ENCODE measurements at regions of chr11 and their contacts with region 1.

Region 1: GRCh38 chr11:66529655-66530054 is 16.2 kb downstream of the ZDHHC24 start:
- DNase-seq: no peak
- H3K4me3 ChIP-seq: no peak overlapping the region
- H3K27ac ChIP-seq: no peak overlapping the region
- H3K4me1 ChIP-seq: no peaks in the 10 kb centered on the region
- H3K27me3 ChIP-seq: no peaks in the 10 kb centered on the region
- CTCF ChIP-seq: no peak

Region 2: DNA sequence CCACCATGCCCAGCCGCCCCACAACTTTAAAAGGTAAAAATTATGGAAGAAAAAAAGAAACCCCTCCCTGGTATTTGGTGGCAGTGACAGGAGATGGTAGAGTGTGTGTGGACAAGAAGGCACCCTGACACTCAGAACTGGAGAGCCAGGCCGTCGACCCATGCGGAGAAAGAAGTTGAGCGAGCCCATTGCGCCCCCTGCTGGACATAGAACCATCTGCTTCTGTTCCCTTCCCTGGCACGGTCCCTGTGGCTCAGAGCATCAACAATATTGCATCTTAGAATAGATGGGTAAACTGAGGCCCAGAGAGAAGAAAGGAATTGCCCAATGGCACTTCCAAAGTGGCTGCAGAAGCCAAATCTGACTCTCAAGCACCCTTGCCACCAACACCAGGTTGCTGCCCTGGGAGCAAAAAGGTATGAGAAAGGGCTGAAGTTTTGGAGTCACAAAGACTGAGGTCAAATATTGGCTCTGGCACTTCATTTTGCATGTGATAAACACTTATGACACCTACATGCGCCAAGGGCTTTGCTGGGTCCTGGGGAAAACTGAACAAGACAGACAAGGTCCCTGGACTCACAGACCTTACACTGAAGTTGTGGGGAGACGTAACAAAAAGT is 99.6 kb before region 1 on chr11:
- CTCF ChIA-PET with region 1: no interaction called
- dilution Hi-C with region 1: loop called (anchors 5 kb)
- in situ Hi-C with region 1: no loop called
- intact Hi-C with region 1: no loop called
- DNase-seq: peak; percentile 39
- H3K4me3 ChIP-seq: no peak overlapping the region
- H3K27ac ChIP-seq: no peak overlapping the region
- H3K4me1 ChIP-seq: no peaks in the 10 kb centered on the region
- H3K27me3 ChIP-seq: no peaks in the 10 kb centered on the region
- CTCF ChIP-seq: peak; percentile 80 to 89

Region 3: DNA sequence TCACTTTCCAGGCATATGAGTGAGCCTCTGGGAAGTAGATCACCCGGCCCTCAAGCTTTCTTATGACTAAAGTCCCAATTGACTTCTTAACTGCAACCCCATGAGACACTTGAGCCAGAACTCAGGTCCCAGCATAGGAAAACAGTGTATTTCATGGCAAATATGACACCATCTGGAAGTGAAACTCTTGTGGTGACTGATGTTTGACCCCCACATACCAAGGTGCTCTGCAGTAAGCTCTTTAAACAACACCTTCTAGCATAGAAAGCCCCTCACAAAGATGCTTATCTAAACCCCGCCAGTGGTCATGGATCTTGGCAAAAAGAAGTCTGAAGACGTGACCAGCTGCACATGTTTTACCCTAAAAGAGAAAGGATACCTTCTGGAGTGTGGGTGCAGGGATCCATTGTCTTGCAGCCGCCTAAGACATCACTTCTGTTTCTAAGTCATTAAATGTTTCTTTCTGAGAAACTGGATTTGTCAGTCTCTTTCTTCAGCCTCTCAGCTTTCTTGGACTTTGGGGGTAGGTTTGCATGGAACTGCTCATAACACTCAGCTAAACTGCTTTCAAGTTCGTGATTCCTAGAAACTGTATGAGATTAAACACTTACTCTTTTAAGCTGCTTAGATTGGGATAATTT is 70.4 kb before region 1 on chr11:
- CTCF ChIA-PET with region 1: no interaction called
- dilution Hi-C with region 1: loop called (anchors 5 kb)
- in situ Hi-C with region 1: no loop called
- intact Hi-C with region 1: no loop called
- DNase-seq: no peak
- H3K4me3 ChIP-seq: no peak overlapping the region
- H3K27ac ChIP-seq: no peak overlapping the region
- H3K4me1 ChIP-seq: peaks cover 6% of the 10 kb centered on the region
- H3K27me3 ChIP-seq: no peaks in the 10 kb centered on the region
- CTCF ChIP-seq: no peak

Region 4: DNA sequence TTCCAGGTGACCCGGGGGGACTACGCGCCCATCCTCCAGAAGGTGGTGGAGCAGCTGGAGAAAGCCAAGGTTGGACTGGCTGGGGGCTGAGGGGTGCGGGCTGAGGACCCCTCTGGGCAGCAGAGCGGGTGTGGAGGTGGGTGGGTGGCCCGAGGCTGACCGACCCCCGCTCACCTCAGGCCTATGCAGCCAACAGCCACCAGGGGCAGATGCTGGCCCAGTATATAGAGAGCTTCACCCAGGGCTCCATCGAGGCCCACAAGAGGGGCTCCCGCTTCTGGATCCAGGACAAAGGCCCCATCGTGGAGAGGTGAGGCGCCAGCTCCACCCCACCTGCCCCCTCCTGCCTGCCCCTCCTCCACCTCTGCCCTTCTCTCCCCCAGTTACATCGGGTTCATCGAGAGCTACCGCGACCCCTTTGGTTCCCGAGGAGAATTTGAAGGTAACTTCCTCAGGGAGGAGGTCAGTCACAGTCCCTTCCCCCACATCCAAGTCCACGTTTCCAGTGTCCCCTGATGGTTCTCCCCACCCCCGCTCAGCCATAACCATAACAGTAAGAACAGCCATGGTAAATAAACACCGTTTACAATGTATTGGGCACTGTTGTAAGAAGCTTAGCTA is 38.2 kb before region 1 on chr11:
- CTCF ChIA-PET with region 1: no interaction called
- dilution Hi-C with region 1: loop called (anchors 5 kb)
- in situ Hi-C with region 1: no loop called
- intact Hi-C with region 1: no loop called
- DNase-seq: no peak
- H3K4me3 ChIP-seq: no peak overlapping the region
- H3K27ac ChIP-seq: no peak overlapping the region
- H3K4me1 ChIP-seq: no peaks in the 10 kb centered on the region
- H3K27me3 ChIP-seq: no peaks in the 10 kb centered on the region
- CTCF ChIP-seq: peak in 1 of 2 donors; percentile 10

Measured in mammary epithelial cell (primary cell).